Activated naive CD4-positive, alpha-beta T cell treated with anti-CD3 and anti-CD28 coated beads, Interleukin-2, amount 10 ng/mL, durations not matched to agents 7 days and 5 days (primary cell): ENCODE measurements at regions of chr21 and their contacts with region 1.

Region 1: DNA sequence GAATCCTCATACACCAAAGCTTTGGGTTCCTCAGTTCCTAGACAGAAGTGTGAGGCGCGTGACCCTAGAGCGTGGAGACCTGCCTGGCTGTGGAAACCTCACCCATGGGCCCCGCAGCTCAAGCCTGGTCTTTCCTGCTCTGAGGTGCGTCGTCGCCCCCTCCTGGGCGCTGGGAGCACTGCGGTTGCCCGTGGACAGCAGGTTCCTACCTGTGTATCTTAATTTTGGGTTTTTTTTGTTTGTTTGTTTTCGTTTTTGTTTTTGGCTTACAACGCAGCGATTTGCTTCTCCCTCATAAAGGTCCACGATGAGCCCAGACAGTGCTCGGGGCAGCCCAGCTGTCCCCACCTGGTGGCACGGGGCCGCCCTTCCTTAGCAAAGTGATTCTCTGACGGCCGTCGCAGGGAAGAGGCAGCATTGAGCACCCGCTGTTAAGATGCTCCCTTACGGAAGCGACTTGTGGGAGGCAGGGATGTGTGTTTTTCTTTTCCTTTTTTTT is 36.6 kb upstream of the TRAPPC10 start:
- DNase-seq: peak; percentile 89
- H3K4me3 Mint-ChIP-seq: no peak overlapping the region
- H3K27ac Mint-ChIP-seq: peak overlapping the region; percentile 14
- H3K4me1 Mint-ChIP-seq: peaks cover 10% of the 10 kb centered on the region
- H3K27me3 Mint-ChIP-seq: no peaks in the 10 kb centered on the region

Region 2: DNA sequence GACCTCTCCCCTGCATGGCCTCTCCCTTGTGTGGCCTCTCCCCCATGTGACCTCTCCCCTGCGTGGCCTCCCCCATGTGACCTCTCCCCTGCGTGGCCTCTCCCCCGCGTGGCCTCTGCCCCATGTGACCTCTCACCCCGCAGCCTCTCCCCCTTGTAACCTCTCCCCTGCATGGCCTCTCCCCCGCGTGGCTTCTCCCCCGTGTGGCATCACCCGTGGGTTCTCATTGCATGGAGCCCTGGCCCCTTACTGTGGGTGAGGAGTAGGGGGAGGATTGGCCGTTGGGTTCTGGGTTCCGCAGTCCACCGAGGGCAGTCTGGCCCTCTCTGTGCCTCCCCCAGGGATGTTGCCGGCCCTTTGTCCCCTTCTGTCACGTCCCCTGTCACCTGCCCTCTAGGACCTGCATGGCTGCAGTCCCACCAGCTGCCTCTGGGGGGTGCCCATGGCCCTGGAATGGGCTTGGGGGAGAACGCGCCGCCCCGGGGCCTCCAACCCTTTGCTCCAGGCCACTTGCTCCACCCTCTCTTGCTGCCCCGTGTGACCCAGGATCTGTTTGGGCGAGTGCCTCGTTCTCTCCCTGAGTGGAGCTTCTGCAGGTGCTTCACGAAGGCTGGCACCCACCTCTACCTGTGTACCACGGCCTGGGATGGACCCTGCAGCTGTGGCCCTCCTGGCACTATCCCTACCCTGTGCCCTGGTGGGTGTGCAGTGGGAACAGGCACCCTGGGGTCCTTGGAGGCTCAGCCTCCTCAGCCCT is 164.9 kb before region 1 on chr21:
- CTCF ChIA-PET with region 1: interaction called, 23 read pairs
- DNase-seq: peak; percentile 95
- H3K4me3 Mint-ChIP-seq: no peak overlapping the region
- H3K27ac Mint-ChIP-seq: no peak overlapping the region
- H3K4me1 Mint-ChIP-seq: peaks cover 23% of the 10 kb centered on the region
- H3K27me3 Mint-ChIP-seq: no peaks in the 10 kb centered on the region

Region 3: DNA sequence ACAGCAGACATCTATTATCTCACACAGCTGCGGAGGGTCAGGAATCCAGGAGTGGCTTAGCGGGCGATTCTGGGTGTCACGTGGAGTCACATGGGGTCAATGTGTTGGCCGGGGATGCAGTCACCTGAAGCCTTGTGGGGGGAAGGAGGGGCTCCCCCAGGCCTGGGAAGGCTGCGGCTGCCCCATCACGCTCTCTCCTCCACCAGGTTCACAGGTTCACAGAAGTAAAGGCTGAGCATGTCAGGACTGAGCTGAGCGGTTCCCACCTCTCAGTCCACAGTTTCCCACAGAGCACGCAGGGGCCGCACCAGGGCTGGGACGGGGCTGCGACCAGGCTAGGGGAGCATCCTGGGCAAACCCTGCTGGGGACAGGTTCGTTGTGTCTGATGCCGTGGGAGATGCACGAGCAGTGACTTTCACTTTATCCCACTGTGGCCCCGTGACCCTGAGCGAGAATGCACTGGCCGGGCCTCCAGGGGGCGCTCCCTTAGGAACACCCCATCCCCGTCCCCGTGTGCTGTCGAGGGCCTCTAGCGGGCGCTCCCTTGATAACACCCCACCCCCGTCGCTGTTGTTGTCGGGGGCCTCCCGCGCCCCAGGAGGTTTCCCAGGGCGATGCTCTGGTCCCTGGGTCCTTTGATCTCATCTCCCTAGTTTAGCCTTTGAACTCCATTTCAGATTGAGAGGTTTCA is 36.6 kb before region 1 on chr21:
- CTCF ChIA-PET with region 1: interaction called, 22 read pairs
- DNase-seq: peak; percentile 94
- H3K4me3 Mint-ChIP-seq: peak overlapping the region; percentile 79
- H3K27ac Mint-ChIP-seq: peak overlapping the region; percentile 81
- H3K4me1 Mint-ChIP-seq: peaks cover 16% of the 10 kb centered on the region
- H3K27me3 Mint-ChIP-seq: no peaks in the 10 kb centered on the region